T-cell (primary cell): ENCODE measurements at regions of chr20 and their contacts with region 1.

Region 1: DNA sequence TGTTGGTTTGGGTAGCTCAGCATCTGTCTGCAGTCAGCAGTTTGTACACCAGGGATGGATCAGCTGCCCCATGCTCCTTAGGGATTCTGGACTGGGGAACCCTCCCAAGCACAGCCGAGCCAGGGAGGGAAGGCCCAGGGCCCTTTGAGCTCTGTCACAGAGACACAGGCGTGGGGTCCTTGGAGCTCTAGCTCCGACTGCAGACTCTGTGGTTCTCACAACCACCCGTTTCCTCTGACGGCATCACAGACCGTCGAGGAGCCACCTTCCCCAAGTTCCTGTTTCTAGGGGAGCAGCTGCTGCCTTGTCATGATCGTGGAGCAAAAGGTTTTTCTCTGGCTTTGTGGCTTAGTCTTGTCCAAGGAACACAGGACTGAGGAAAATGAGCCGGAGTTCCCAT is at the start of gene SLA2:
- DNase-seq: peak; percentile 44 to 84 (median 71)
- ATAC-seq: peak; percentile 82 to 89 (median 88)
- H3K4me3 ChIP-seq: peak within 1 kb of the TSS; percentile 61 to 73
- H3K4me3 Mint-ChIP-seq: peak within 1 kb of the TSS; percentile 93 to 96 (median 95)
- H3K27ac ChIP-seq: peak within 1 kb of the TSS; percentile 77
- H3K27ac Mint-ChIP-seq: peak within 1 kb of the TSS; percentile 98 to 100
- H3K4me1 ChIP-seq: peaks cover 25 to 60% of the 10 kb centered on the region in 2 experiments
- H3K4me1 Mint-ChIP-seq: peaks cover 55 to 61% (median 61%) of the 10 kb centered on the region in 3 donors
- H3K27me3 ChIP-seq: no peaks in the 10 kb centered on the region
- H3K27me3 Mint-ChIP-seq: no peaks in the 10 kb centered on the region
- total RNA-seq, gene SLA2: 26.2 to 46.0 (median 28.8) TPM

Region 2: GRCh38 chr20:36605399-36606157 is 40.4 kb before region 1 on chr20 and contains the start of gene RAB5IF:
- CTCF ChIA-PET with region 1: interaction called, 3 to 10 read pairs
- POLR2A ChIA-PET with region 1: interaction called, 3 read pairs
- DNase-seq: peak; percentile 97 to 100 (median 99)
- ATAC-seq: peak; percentile 91 to 94 (median 92)
- H3K4me3 ChIP-seq: peak within 1 kb of the TSS; percentile 87 to 98
- H3K4me3 Mint-ChIP-seq: peak within 1 kb of the TSS; percentile 97
- H3K27ac ChIP-seq: peak within 1 kb of the TSS; percentile 96
- H3K27ac Mint-ChIP-seq: peak within 1 kb of the TSS; percentile 96
- H3K4me1 ChIP-seq: peaks cover 9 to 38% of the 10 kb centered on the region in 2 experiments
- H3K4me1 Mint-ChIP-seq: peaks cover 29 to 38% (median 33%) of the 10 kb centered on the region in 3 donors
- H3K27me3 ChIP-seq: no peaks in the 10 kb centered on the region
- H3K27me3 Mint-ChIP-seq: peaks cover 0 to 1% of the 10 kb centered on the region in 2 donors
- total RNA-seq, gene RAB5IF: 53.6 to 72.2 (median 59.9) TPM

Region 3: DNA sequence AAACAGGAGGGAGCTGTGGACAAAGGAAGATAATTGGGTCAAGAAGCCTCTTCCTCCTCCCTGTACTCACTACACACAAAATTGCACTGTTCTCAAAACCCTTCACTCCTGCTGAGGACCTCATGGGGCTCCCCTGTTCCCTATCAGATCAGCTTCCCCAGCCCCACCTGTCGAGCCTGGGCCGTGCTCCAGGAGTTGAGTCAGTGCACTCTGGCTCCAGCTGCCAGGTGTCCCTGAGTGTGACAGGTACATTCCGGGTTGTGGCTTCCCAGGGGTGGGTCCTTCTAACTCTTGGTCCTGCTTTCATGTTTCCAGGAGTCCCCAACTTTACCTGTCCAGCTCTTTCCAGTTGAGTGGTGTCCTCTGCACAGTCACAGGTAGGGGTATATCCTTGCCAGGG is 32.0 kb before region 1 on chr20:
- CTCF ChIA-PET with region 1: interaction called, 4 to 10 read pairs
- POLR2A ChIA-PET with region 1: interaction called in 1 of 2 experiments, 4 read pairs
- DNase-seq: no peak
- ATAC-seq: no peak
- H3K4me3 ChIP-seq: no peak overlapping the region
- H3K4me3 Mint-ChIP-seq: no peak overlapping the region
- H3K27ac ChIP-seq: no peak overlapping the region
- H3K27ac Mint-ChIP-seq: peak overlapping the region in 1 of 2 donors; percentile 69
- H3K4me1 ChIP-seq: peaks cover 0 to 9% of the 10 kb centered on the region in 2 experiments
- H3K4me1 Mint-ChIP-seq: peaks cover 11 to 32% (median 12%) of the 10 kb centered on the region in 3 donors
- H3K27me3 ChIP-seq: no peaks in the 10 kb centered on the region
- H3K27me3 Mint-ChIP-seq: no peaks in the 10 kb centered on the region

Region 4: DNA sequence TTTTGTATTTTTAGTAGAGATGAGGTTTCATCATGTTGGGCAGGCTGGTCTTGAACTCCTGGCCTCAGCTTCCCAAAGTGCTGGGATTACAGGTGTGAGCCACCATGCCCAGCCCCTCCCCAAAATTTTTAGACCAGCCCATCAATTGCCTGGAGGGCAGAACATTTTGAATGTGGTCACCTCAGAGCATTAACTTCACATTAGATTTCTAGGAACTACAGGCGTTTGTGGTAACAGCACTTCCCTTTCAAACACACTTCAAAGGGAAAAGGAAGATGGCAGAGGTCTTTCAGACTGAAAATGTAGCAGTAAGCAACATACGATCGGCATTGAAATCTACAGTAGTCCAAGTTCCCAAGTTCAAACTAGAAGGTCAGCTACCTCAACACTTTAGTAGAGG is 12.3 kb after region 1 on chr20:
- CTCF ChIA-PET with region 1: interaction called in 1 of 2 experiments, 3 read pairs
- POLR2A ChIA-PET with region 1: interaction called in 1 of 2 experiments, 11 read pairs
- DNase-seq: peak in 1 of 35 experiments; percentile 54
- ATAC-seq: peak; percentile 64 to 90 (median 83)
- H3K4me3 ChIP-seq: peak overlapping the region in 1 of 2 donors; percentile 8
- H3K4me3 Mint-ChIP-seq: peak overlapping the region; percentile 41 to 67 (median 43)
- H3K27ac ChIP-seq: no peak overlapping the region
- H3K27ac Mint-ChIP-seq: peak overlapping the region; percentile 7 to 60
- H3K4me1 ChIP-seq: peaks cover 10 to 11% of the 10 kb centered on the region in 2 experiments
- H3K4me1 Mint-ChIP-seq: peaks cover 18 to 23% (median 22%) of the 10 kb centered on the region in 3 donors
- H3K27me3 ChIP-seq: no peaks in the 10 kb centered on the region
- H3K27me3 Mint-ChIP-seq: no peaks in the 10 kb centered on the region

Region 5: DNA sequence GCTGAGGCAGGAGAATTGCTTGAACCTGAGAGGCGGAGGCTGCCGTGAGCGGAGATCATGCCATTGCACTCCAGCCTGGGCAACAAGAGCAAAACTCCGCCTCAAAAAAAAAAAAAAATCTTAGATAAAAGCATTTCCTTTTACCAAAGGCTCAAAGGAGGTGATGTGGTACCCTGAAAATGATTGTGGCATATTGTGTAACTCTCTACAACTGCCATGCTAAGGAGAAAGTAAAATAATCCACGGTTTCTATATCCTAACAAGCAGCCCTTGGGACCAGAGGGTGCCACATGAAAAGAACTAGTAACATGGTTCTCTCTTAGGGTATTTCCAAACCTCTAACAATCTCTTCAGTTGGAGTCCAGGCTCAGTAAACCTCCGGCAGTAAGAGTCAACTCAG is 38.7 kb after region 1 on chr20:
- CTCF ChIA-PET with region 1: no interaction called
- POLR2A ChIA-PET with region 1: no interaction called
- DNase-seq: peak in 1 of 35 experiments; percentile 5
- ATAC-seq: peak in 1 of 4 experiments; percentile 38
- H3K4me3 ChIP-seq: no peak overlapping the region
- H3K4me3 Mint-ChIP-seq: no peak overlapping the region
- H3K27ac ChIP-seq: no peak overlapping the region
- H3K27ac Mint-ChIP-seq: no peak overlapping the region
- H3K4me1 ChIP-seq: peaks cover 0 to 3% of the 10 kb centered on the region in 2 experiments
- H3K4me1 Mint-ChIP-seq: no peaks in the 10 kb centered on the region
- H3K27me3 ChIP-seq: no peaks in the 10 kb centered on the region
- H3K27me3 Mint-ChIP-seq: no peaks in the 10 kb centered on the region